ENCODE measurements at regions of chr1 and their contacts with region 1.

Region 1: DNA sequence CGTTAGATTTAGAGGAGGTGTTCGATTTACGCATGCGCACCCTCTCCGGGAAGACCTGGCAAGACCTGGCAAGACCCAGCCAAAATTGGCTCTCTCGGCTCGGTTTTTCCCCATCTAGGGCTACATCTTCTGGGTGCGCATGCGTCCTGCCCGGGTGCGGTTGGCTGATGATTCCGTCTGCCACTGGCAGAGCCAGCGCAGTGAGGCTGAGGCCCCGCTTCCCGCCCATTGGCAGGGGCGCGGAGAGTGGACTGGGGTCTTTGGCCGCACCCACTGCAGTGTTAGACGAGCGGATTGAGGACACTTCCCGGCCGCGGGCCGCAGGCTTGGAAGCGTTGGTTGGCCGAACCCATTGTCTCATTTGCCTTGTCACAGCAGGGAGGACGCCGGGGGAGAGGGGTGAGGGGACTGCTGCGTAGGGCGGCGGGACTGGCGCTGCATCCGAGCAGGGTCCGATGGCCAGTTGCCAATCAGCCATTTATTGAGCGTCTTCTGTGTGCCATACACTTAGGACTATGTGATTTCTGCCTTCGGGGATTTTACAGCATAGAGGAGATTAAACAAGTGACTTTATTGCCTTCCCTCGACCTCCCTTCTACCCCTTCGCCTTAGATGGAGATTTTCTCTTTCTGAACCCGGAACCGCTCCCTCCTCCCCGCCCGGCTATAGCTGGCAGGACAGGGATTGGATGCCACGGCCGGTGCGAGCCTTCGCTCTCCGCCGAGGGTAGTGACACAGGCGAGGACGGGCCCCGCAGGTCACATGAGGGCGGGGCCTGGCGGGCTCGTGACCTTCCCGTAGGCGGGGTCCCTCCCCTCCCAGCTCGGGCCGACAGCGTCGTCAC is 43.7 kb downstream of the MEF2D start:
- DNase-seq: peak; percentile 97 to 99 (median 99)
- H3K4me3 ChIP-seq: peak overlapping the region; percentile 58
- H3K27ac ChIP-seq: peak overlapping the region; percentile 89 to 96
- H3K4me1 ChIP-seq: no peaks in the 10 kb centered on the region
- H3K27me3 ChIP-seq: no peaks in the 10 kb centered on the region
- CTCF ChIP-seq: no peak
- EP300 ChIP-seq: peak; percentile 91
- POLR2A ChIP-seq: peak; percentile 72

Region 2: DNA sequence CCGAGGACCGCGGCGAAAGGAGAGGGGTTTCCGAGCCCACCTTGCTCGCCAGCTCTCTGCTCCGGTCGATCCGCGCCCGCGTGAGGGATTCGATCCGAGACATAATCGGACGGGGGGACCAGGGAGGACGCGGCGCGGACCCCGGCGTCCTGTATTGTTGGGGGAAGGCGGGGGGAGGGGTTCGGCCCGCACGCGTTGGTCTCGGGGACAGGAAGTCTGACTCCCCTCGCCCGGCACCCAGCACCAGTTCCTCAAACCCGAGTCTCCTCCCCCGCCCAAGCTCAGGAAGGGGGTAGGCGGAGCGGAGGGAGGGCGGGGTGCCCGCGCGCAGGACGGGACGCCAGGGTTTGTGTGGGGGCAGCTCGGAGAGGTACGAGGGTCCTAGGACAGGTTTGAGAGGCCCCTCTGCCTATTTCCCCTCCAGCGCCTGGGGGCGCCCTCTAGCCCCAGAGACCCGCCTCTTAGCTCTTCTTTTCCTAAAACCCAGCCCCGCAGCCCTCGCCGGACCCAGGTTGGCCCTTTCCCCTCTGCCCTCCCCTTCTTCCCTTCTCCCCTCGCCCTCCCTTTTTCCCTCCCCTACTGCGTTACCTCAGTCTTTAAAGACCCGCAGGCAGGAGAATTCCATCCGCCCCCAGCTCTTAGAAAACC is 478.4 kb before region 1 on chr1 and contains the start of gene ARHGEF2:
- intact Hi-C with region 1: no loop called
- DNase-seq: peak; percentile 84 to 86 (median 85)
- H3K4me3 ChIP-seq: peak within 1 kb of the TSS; percentile 78
- H3K27ac ChIP-seq: peak within 1 kb of the TSS; percentile 75 to 91
- H3K4me1 ChIP-seq: peaks cover 33% of the 10 kb centered on the region
- H3K27me3 ChIP-seq: no peaks in the 10 kb centered on the region
- CTCF ChIP-seq: peak in 1 of 3 donors; percentile 12
- EP300 ChIP-seq: no peak
- POLR2A ChIP-seq: peak; percentile 43
- total RNA-seq, gene ARHGEF2: 41.0 to 221 (median 63.3) TPM

Region 3: GRCh38 chr1:156500797-156501499 is 44.1 kb after region 1 on chr1:
- intact Hi-C with region 1: loop called in 3 of 4 experiments (anchors 2 to 5 kb)
- DNase-seq: peak; percentile 94 to 97 (median 97)
- H3K4me3 ChIP-seq: peak overlapping the region; percentile 76
- H3K27ac ChIP-seq: peak overlapping the region; percentile 99 to 100
- H3K4me1 ChIP-seq: peaks cover 46% of the 10 kb centered on the region
- H3K27me3 ChIP-seq: no peaks in the 10 kb centered on the region
- CTCF ChIP-seq: peak; percentile 43 to 56 (median 52)
- EP300 ChIP-seq: no peak
- POLR2A ChIP-seq: peak; percentile 96

Region 4: DNA sequence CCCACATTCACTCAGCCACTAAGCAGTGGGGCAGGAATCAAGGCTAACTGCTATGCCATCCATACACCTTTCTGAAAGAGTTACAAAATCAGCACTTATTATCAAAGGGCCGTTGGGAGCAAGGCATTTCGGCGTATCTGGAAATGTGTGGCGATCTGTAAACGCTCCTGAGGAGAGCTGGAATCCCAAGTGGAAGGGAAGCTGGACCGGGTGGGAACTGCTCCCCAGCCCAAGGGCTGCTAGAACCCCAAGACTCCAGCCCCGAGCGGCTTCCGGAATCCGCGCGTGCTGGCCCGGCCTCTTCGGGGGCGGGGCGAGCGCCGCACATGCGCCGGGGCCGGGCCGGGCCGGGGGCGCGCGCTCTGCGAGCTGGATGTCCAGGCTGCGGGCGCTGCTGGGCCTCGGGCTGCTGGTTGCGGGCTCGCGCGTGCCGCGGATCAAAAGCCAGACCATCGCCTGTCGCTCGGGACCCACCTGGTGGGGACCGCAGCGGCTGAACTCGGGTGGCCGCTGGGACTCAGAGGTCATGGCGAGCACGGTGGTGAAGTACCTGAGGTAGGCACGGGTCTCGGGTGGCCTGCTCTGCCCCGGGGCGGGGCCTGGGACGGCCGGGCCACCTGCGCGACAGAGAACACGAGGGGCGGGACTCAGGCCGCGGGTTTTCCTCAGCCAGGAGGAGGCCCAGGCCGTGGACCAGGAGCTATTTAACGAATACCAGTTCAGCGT is 134.8 kb after region 1 on chr1 and contains the start of gene NAXE:
- intact Hi-C with region 1: loop called in 2 of 4 experiments (anchors 5 kb)
- DNase-seq: peak; percentile 68 to 82 (median 78)
- H3K4me3 ChIP-seq: peak within 1 kb of the TSS; percentile 51
- H3K27ac ChIP-seq: peak within 1 kb of the TSS; percentile 59 to 71
- H3K4me1 ChIP-seq: no peaks in the 10 kb centered on the region
- H3K27me3 ChIP-seq: no peaks in the 10 kb centered on the region
- CTCF ChIP-seq: no peak
- EP300 ChIP-seq: no peak
- POLR2A ChIP-seq: peak; percentile 48
- total RNA-seq, gene NAXE: 43.5 to 85.4 (median 65.4) TPM

Region 5: GRCh38 chr1:156608036-156608674 is 151.3 kb after region 1 on chr1:
- intact Hi-C with region 1: loop called in 2 of 4 experiments (anchors 5 kb)
- DNase-seq: peak in 3 of 5 donors; percentile 35 to 68 (median 60)
- H3K4me3 ChIP-seq: no peak overlapping the region
- H3K27ac ChIP-seq: no peak overlapping the region
- H3K4me1 ChIP-seq: no peaks in the 10 kb centered on the region
- H3K27me3 ChIP-seq: no peaks in the 10 kb centered on the region
- CTCF ChIP-seq: peak; percentile 66 to 82 (median 71)
- EP300 ChIP-seq: no peak
- POLR2A ChIP-seq: no peak

Region 6: DNA sequence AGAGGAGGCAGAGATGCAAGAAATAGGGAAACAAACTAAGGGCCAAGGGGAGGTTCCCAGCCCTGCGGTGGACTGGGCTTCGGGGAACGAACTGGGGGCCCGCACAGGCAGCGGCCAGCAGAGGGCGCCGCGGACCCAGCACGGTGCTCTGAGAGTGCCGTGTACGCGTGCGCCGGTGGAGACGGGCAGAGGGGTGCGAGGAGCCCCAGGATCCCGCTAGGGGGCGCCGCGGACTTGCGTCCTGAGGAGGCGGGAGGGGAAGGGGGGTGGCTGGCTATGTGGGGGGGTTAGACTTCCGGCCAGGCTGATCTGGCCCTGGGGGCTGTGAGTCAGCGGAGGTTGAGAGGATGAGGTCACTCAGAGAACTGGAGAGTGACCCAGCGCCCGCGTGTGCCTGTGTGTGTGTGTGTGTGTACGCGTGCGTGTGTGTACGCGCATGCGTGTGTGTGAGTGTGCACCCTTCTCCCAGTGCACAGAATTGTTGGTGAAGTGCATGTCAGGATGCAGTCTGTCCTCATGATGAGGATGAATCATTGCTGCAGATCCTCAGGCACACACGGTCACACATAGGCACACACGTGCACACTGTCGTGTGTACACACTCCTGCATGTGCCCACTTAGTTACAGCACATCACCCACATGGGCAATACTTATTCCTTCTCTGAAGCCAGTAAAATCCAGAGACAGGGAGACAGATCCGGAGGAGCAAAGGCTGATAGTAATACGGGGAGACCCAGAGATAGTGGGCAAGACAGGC is 203.3 kb after region 1 on chr1:
- intact Hi-C with region 1: loop called in 1 of 4 experiments (anchors 5 kb)
- DNase-seq: peak; percentile 97 to 98 (median 97)
- H3K4me3 ChIP-seq: no peak overlapping the region
- H3K27ac ChIP-seq: peak overlapping the region; percentile 22 to 52
- H3K4me1 ChIP-seq: no peaks in the 10 kb centered on the region
- H3K27me3 ChIP-seq: no peaks in the 10 kb centered on the region
- CTCF ChIP-seq: peak; percentile 88 to 97 (median 97)
- EP300 ChIP-seq: no peak
- POLR2A ChIP-seq: peak; percentile 10

Measured in ovary (tissue), 10 donors.